Activated B cell treated with CpG ODN at 0.5 μM for 24 hours (primary cell): ENCODE measurements at regions of chr4 and their contacts with region 1.

Region 1: GRCh38 chr4:101835121-101835904 is 44.8 kb downstream of the BANK1 start:
- DNase-seq: no peak
- ATAC-seq: no peak
- H3K4me3 Mint-ChIP-seq: peak overlapping the region; percentile 9
- H3K27ac Mint-ChIP-seq: peak overlapping the region; percentile 84
- H3K4me1 Mint-ChIP-seq: peaks cover 84% of the 10 kb centered on the region
- H3K27me3 Mint-ChIP-seq: no peaks in the 10 kb centered on the region
- CTCF ChIP-seq: no peak

Region 2: GRCh38 chr4:101806914-101807313 is 28.4 kb before region 1 on chr4:
- CTCF ChIA-PET with region 1: no interaction called
- POLR2A ChIA-PET with region 1: interaction called, 10 read pairs
- intact Hi-C with region 1: loop called (anchors 2 kb)
- DNase-seq: no peak
- ATAC-seq: peak; percentile 87
- H3K4me3 Mint-ChIP-seq: peak overlapping the region; percentile 73
- H3K27ac Mint-ChIP-seq: peak overlapping the region; percentile 95
- H3K4me1 Mint-ChIP-seq: peaks cover 83% of the 10 kb centered on the region
- H3K27me3 Mint-ChIP-seq: no peaks in the 10 kb centered on the region
- CTCF ChIP-seq: no peak

Region 3: DNA sequence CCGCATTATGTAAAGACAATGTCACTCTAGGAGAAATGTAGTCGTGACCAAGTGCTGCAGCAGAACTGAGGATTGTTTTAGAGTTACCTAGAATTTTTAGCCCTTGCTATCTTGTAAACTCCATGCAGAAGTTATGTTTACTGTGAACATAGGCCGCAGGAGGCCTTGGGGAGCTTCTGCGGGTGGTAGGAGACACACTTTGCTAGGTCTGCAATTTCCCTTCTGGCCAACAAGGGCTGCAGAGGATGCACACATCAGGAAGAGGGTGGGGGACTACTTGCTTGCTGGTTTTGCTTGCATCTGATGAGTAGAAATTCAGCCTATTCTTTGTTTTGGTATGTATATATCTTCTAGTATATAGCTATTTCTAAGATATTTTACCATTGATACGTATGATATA is 21.7 kb before region 1 on chr4:
- CTCF ChIA-PET with region 1: interaction called, 3 read pairs
- POLR2A ChIA-PET with region 1: interaction called, 23 read pairs
- intact Hi-C with region 1: loop called (anchors 2 kb)
- DNase-seq: peak; percentile 39
- ATAC-seq: peak; percentile 97
- H3K4me3 Mint-ChIP-seq: peak overlapping the region; percentile 81
- H3K27ac Mint-ChIP-seq: peak overlapping the region; percentile 92
- H3K4me1 Mint-ChIP-seq: peaks cover 83% of the 10 kb centered on the region
- H3K27me3 Mint-ChIP-seq: no peaks in the 10 kb centered on the region
- CTCF ChIP-seq: no peak

Region 4: DNA sequence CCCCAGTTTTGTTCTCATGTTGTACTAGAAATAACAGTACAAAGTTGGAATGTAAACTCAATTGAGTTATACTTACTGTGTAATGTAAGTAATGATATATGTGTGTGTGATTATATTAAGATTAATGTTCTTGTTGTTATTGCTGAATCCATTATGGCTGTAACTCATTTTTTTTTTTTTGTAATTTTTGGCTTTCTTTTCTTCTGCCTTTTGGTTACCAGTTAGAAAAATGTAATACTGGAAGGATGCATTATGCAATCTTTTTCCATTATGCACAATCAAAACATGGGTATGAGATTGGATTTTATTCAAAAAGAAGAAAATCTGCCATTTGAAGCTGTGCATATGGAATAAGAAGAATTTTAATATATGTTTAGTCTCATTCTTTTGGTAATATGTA is 10.8 kb before region 1 on chr4:
- CTCF ChIA-PET with region 1: no interaction called
- POLR2A ChIA-PET with region 1: interaction called, 10 read pairs
- intact Hi-C with region 1: loop called (anchors 1 kb)
- DNase-seq: no peak
- ATAC-seq: no peak
- H3K4me3 Mint-ChIP-seq: peak overlapping the region; percentile 21
- H3K27ac Mint-ChIP-seq: peak overlapping the region; percentile 72
- H3K4me1 Mint-ChIP-seq: peaks cover 78% of the 10 kb centered on the region
- H3K27me3 Mint-ChIP-seq: no peaks in the 10 kb centered on the region
- CTCF ChIP-seq: no peak

Region 5: GRCh38 chr4:101846550-101846949 is 11.2 kb after region 1 on chr4:
- CTCF ChIA-PET with region 1: interaction called, 3 read pairs
- POLR2A ChIA-PET with region 1: interaction called, 4 read pairs
- intact Hi-C with region 1: loop called (anchors 1 kb)
- DNase-seq: no peak
- ATAC-seq: peak; percentile 25
- H3K4me3 Mint-ChIP-seq: peak overlapping the region; percentile 12
- H3K27ac Mint-ChIP-seq: peak overlapping the region; percentile 83
- H3K4me1 Mint-ChIP-seq: peaks cover 90% of the 10 kb centered on the region
- H3K27me3 Mint-ChIP-seq: no peaks in the 10 kb centered on the region
- CTCF ChIP-seq: no peak

Region 6: GRCh38 chr4:101853028-101853427 is 17.7 kb after region 1 on chr4:
- CTCF ChIA-PET with region 1: no interaction called
- POLR2A ChIA-PET with region 1: interaction called, 7 read pairs
- intact Hi-C with region 1: loop called (anchors 2 kb)
- DNase-seq: no peak
- ATAC-seq: peak; percentile 25
- H3K4me3 Mint-ChIP-seq: peak overlapping the region; percentile 69
- H3K27ac Mint-ChIP-seq: peak overlapping the region; percentile 94
- H3K4me1 Mint-ChIP-seq: peaks cover 91% of the 10 kb centered on the region
- H3K27me3 Mint-ChIP-seq: no peaks in the 10 kb centered on the region
- CTCF ChIP-seq: no peak